Activated T-helper 2 cell treated with anti-CD3 and anti-CD28 coated beads, Interferon-gamma antibody, Interleukin-2, Interleukin-4, amounts not matched to agents 10 μg/mL and 5 μg/mL and 100 μg/mL, durations not matched to agents 14 hours and 24 hours and 36 hours (primary cell): ENCODE measurements at regions of chr1 and their contacts with region 1.

Region 1: GRCh38 chr1:68481041-68481440 is 15.8 kb downstream of the DEPDC1 start:
- DNase-seq: no peak
- H3K4me3 Mint-ChIP-seq: no peak overlapping the region
- H3K27ac Mint-ChIP-seq: no peak overlapping the region
- H3K4me1 Mint-ChIP-seq: peaks cover 8% of the 10 kb centered on the region
- H3K27me3 Mint-ChIP-seq: no peaks in the 10 kb centered on the region

Region 2: DNA sequence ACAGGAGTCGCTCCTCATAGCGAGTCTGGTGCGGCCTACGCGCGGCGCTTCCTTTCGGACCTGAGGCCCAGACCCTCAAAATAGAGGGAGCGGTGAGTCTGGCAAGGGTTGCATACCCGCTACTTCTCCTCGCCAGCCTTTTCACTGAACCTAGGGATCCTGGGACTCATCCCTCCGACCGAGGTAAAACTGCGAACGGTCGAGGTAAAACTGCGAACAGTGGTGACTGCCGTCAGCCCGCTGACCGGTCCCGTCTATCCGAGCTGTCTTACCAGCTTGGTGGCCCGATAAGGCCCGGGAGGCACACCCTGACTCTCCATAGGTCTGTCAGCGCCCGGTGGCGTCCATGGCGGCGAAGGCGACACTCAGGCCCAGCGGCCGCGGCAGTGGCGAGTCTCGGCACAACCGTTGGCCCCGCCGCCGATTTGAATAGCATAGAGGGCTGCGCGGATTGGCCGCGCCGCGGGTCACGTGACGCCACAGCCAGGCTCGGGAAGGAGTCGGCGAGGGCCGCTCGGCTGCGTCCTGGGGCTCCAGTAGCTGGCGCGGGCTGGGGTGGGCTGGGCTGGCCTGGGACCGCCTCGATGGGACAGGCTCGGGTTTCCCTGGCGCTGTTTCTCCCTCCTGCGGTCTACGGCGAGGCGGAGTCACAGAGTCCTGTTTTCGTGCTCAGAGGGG is 15.8 kb after region 1 on chr1 and contains the start of gene DEPDC1:
- intact Hi-C with region 1: loop called (anchors 2 kb)
- DNase-seq: peak; percentile 84
- H3K4me3 Mint-ChIP-seq: peak within 1 kb of the TSS; percentile 88
- H3K27ac Mint-ChIP-seq: peak within 1 kb of the TSS; percentile 86
- H3K4me1 Mint-ChIP-seq: peaks cover 33% of the 10 kb centered on the region
- H3K27me3 Mint-ChIP-seq: peaks cover 22% of the 10 kb centered on the region
- total RNA-seq, gene DEPDC1: 19.9 and 25.3 TPM in 2 replicates